Upper lobe of right lung (tissue), 1 donor: ENCODE measurements at regions of chr4 and their contacts with region 1.

Region 1: GRCh38 chr4:38902695-38903094 is 35.1 kb downstream of the FAM114A1 start:
- DNase-seq: no peak
- ATAC-seq: peak; percentile 60
- H3K4me3 ChIP-seq: no peak overlapping the region
- H3K27ac ChIP-seq: no peak overlapping the region
- H3K4me1 ChIP-seq: no peaks in the 10 kb centered on the region
- H3K27me3 ChIP-seq: no peaks in the 10 kb centered on the region
- CTCF ChIP-seq: peak; percentile 44

Region 2: GRCh38 chr4:38818441-38818976 is 84.2 kb before region 1 on chr4:
- intact Hi-C with region 1: no loop called
- DNase-seq: no peak
- ATAC-seq: no peak
- H3K4me3 ChIP-seq: no peak overlapping the region
- H3K27ac ChIP-seq: no peak overlapping the region
- H3K4me1 ChIP-seq: no peaks in the 10 kb centered on the region
- H3K27me3 ChIP-seq: no peaks in the 10 kb centered on the region
- CTCF ChIP-seq: no peak

Region 3: DNA sequence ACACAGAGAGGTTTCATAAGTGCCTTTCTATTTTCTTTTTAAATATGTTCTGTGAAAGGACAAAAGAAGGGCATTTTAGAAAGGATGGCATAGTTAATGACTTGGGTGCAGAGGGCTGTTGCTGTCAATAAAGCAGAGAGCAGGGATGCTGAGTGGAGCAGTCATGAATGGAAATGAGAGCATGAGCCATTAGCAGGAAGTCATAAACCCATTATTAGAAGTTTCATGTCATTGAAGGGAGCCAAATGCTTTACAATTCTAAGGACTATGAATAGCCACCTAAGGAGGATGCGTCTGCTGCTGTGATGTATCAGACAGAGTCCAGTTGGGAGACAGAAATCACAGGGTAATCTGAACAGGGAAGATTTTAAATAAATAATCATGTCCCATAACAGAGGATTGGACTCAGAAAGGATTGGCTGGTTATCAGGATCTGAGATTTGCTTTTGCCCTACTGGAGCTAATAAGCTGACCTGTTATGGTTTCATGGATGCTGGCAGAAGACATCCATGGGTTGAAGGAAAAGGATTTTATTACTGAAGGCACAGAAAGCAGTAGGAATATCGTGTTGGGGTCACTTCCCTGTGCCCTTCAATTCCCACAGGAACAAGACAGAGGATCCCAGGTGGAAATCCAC is 232.1 kb after region 1 on chr4:
- intact Hi-C with region 1: loop called (anchors 10 kb)
- DNase-seq: no peak
- ATAC-seq: no peak
- H3K4me3 ChIP-seq: no peak overlapping the region
- H3K27ac ChIP-seq: no peak overlapping the region
- H3K4me1 ChIP-seq: peaks cover 6% of the 10 kb centered on the region
- H3K27me3 ChIP-seq: no peaks in the 10 kb centered on the region
- CTCF ChIP-seq: no peak

Region 4: DNA sequence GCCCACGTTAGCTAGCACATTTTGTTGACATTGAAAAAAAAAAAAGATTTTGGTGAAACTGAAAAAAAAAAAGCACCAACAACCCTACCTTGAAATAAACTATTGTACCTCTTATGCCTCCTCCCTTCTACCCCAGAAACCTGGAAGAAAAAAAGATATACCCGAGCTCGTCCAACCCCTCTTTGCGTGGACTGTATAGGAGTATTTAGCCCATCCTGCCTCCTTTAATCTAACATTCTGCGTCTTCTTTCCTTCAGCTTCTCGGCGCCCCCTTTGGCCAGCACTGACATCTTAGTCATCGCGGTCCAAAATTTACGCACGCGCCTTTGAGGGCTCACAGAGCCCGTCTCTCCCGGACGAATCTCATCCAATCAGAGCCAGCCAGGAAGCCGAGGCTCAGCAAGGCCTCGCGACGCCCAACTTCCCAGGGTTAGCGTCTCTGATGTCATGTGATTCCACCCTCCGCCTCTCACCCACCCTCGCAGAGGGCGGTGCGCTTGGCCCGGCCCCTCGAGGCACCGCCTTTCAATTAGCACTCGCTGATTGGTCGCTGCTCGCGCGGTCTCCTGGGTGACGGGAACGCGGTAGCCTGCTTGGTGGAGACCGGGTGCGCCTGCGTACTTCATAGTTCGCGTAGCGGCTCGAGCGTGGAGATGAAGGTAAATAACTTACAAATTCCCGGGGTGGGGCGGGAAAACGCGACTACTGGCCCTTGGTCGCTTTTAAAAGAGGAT is 279.4 kb after region 1 on chr4 and contains the start of gene WDR19:
- intact Hi-C with region 1: no loop called
- DNase-seq: peak; percentile 100
- ATAC-seq: peak; percentile 100
- H3K4me3 ChIP-seq: peak within 1 kb of the TSS; percentile 89
- H3K27ac ChIP-seq: peak within 1 kb of the TSS; percentile 72
- H3K4me1 ChIP-seq: peaks cover 5% of the 10 kb centered on the region
- H3K27me3 ChIP-seq: no peaks in the 10 kb centered on the region
- CTCF ChIP-seq: peak; percentile 55
- total RNA-seq, gene WDR19: 32.9 TPM